ENCODE measurements at regions of chr11 and their contacts with region 1.

Region 1: GRCh38 chr11:34357701-34358257 is at the start of gene ABTB2:
- DNase-seq: peak; percentile 96 to 99 (median 98)
- ATAC-seq: peak; percentile 91
- H3K4me3 ChIP-seq: peak within 1 kb of the TSS; percentile 59 to 78
- H3K27ac ChIP-seq: peak within 1 kb of the TSS; percentile 66 to 67
- H3K4me1 ChIP-seq: peaks cover 12 to 33% of the 10 kb centered on the region in 2 donors
- H3K27me3 ChIP-seq: peaks cover 0 to 44% of the 10 kb centered on the region in 2 donors
- CTCF ChIP-seq: no peak
- polyA plus RNA-seq, gene ABTB2: 3.7 to 5.5 (median 4.8) TPM

Region 2: DNA sequence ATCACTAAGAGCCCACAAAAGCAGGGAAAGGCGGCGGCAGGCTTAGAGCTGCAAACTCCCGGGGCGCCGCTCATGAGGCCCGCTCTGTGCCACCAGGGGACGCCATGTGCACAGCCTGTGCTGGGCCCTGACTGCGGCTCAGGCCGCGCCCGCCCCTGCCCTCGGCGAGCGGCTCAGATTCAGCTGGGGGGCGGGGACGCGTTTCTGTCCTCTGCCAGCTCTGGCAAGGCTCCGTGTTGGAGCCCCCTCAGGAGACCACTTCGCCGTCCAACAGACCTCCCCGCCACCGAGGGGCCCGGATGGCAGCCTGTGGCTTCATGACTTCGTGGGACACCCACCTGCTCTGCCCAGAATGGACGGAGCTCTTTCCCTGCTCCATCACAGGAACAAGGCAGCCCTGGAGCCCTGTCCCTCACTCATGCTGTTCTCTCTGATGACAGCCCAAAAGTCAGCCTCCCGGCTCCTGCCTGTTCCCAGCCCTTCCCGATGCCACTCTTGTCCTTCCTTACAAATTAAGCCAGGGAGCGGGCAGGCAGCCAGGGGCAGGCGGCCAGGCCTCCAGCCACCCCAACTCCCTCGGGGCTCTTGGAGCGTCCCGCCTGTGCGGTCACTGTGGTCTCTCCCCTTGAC is 183.3 kb before region 1 on chr11:
- intact Hi-C with region 1: loop called in 1 of 2 experiments (anchors 2 kb)
- DNase-seq: peak; percentile 70 to 95 (median 85)
- ATAC-seq: peak; percentile 100
- H3K4me3 ChIP-seq: peak overlapping the region in 1 of 2 donors; percentile 7
- H3K27ac ChIP-seq: no peak overlapping the region
- H3K4me1 ChIP-seq: peaks cover 0 to 8% of the 10 kb centered on the region in 2 donors
- H3K27me3 ChIP-seq: peaks cover 0 to 20% of the 10 kb centered on the region in 2 donors
- CTCF ChIP-seq: peak; percentile 82 to 91

Region 3: DNA sequence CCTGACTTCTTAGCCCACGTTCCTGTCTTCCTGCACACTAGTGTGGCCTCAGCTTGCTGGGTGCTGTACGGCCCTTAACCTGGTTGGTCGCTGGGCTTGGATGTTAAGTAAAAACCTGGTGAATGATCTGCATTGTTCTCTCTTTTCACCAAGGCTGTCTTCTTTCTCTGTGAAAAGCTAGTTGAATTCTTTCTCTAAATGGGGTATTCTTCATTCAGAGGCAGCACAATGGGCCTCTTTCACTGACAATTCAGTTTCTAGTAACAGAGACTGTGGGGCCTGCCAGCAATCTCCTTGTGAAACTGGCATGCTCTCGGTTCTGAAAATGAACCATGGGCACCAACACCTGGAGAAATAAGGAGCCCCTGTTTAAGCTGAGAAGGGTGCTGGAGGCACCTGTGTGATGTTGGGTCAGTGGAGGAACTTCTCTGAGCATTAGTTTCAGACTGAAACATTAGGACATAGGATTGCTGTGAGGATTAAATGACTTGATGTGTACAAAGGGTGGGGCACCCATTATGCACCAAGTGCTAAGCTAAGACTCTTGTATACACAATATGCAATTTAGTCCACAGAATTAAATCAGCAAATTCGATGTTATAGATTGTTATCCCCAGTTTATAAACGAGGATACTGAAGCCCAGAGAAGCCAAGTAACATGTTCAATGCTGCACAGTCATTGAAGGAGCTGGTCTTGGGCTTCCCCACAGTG is 188.9 kb after region 1 on chr11:
- intact Hi-C with region 1: no loop called
- DNase-seq: no peak
- ATAC-seq: peak; percentile 54
- H3K4me3 ChIP-seq: no peak overlapping the region
- H3K27ac ChIP-seq: no peak overlapping the region
- H3K4me1 ChIP-seq: no peaks in the 10 kb centered on the region
- H3K27me3 ChIP-seq: peaks cover 0 to under 1% of the 10 kb centered on the region in 2 donors
- CTCF ChIP-seq: no peak

Region 4: DNA sequence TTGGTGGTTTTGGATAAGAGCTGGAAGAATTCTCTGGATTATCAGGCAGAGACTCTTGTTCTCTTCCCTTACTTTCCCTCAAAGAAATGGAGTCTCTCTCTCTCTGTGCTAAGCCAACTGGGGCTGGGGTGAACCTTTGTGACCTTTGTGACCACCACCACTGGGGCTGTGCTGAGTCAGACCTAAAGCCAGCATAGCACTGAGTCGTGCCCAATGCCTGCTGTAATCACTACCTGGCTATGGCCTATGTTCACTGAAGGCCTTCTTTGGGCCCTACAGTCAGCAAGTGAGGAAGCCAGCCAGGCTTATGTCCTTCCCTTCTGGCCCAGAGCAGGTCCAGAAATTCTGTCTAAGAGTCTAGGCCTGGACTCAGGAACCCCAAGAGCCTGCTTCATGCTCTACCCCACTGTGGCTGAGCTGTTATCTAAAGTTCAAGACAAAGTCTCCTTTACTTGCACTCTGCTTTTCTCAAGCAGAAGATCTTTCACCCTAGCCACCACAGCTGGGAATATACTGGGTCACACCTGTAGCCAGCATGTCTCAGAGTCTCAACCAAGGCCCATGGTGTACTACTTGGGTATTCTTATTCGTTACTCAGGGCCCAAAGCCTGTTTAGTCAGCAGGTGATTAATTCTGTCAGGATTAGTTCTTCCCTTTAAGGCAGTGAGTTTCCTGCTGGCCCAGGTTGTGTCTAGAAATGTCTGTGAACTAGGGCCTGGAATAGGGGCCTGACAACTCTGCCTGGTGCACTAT is 349.1 kb after region 1 on chr11:
- intact Hi-C with region 1: no loop called
- DNase-seq: no peak
- ATAC-seq: no peak
- H3K4me3 ChIP-seq: no peak overlapping the region
- H3K27ac ChIP-seq: no peak overlapping the region
- H3K4me1 ChIP-seq: no peaks in the 10 kb centered on the region
- H3K27me3 ChIP-seq: no peaks in the 10 kb centered on the region
- CTCF ChIP-seq: no peak

Measured in left lung (tissue), 14 donors.